Activated naive CD4-positive, alpha-beta T cell treated with anti-CD3 and anti-CD28 coated beads for 36 hours (primary cell): ENCODE measurements at regions of chr5 and their contacts with region 1.

Region 1: DNA sequence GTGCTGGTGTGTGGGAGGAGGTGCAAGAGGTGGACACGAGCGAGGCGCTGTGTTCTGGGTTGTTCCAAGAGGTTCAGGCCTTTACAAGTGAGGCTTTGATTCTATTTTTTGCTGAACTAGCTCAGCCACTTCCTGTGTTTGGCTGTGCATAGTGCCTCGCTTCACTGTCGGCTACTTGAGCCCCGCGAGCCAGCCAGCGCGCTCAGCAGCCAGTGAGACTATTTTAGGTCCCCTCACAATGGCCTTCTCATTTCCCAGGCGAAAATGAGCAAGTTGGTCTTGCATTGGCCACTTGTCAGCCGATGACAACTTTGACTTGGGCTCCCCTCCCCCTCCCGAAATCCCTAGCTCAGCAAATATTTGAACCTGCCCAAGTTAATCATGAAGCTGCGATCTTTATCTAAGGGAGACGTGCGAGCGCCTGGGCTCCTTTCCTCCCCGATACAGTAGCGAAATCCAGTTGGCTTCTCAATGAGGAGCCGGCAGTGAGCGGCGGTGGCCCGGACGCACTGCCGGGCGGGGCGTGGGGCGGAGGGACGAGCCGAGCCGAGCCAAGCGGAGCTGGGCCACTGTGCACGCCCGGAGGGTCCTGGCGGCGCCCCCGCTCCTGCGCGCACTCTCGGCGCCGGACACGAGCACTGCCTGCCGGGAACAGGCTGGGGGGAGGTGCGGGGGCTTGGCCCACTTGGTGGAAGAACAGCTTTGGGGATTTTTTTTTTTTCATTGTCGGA is 72.6 kb downstream of the PIK3R1 start:
- DNase-seq: peak; percentile 58
- H3K4me3 Mint-ChIP-seq: peak overlapping the region; percentile 83
- H3K27ac Mint-ChIP-seq: peak overlapping the region; percentile 81
- H3K4me1 Mint-ChIP-seq: peaks cover 73% of the 10 kb centered on the region
- H3K27me3 Mint-ChIP-seq: no peaks in the 10 kb centered on the region

Region 2: DNA sequence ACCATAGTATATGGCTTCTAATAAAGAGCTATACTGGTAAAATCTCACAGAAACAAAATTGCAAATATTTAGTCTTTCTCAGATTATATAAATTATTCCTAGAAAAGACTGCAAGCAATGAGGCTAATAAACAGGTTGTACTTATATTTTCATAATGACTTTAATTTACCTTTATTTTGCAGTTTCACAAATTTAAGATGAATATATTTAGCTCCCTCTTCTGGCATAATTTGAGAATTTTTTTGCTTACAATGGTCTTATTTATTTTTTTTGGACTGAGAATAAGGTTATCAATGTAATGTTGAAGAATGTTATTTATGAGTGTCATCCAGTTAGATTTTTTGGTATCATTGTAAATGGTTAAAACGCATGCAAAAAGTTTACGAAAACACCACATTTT is 15.9 kb before region 1 on chr5:
- CTCF ChIA-PET with region 1: interaction called, 21 read pairs
- intact Hi-C with region 1: no loop called
- DNase-seq: no peak
- H3K4me3 Mint-ChIP-seq: no peak overlapping the region
- H3K27ac Mint-ChIP-seq: peak overlapping the region; percentile 36
- H3K4me1 Mint-ChIP-seq: peaks cover 82% of the 10 kb centered on the region
- H3K27me3 Mint-ChIP-seq: no peaks in the 10 kb centered on the region

Region 3: DNA sequence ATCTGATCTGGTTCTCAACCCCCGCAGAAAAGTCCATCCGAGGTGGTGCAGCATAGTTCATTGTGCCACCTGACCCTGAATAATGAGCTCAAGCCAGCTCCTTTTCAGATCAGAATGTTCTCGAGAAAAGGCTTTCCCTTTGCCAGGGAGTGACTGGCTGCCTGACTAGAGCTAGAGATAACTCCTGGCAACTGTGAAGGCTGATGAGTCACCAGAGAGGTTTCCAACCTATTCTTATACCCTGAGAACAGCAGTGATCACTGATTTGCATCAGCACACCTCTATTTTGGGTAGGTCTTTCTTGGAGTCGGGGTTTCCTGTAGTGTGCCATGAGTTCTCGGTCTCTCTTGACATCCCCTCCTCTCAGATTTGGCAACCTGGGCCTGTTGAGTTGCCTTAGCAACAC is 55.3 kb after region 1 on chr5:
- CTCF ChIA-PET with region 1: interaction called, 5 read pairs
- intact Hi-C with region 1: loop called (anchors 1 kb)
- DNase-seq: peak; percentile 57
- H3K4me3 Mint-ChIP-seq: no peak overlapping the region
- H3K27ac Mint-ChIP-seq: no peak overlapping the region
- H3K4me1 Mint-ChIP-seq: peaks cover 25% of the 10 kb centered on the region
- H3K27me3 Mint-ChIP-seq: no peaks in the 10 kb centered on the region

Region 4: GRCh38 chr5:68544648-68545552 is 256.8 kb after region 1 on chr5:
- CTCF ChIA-PET with region 1: no interaction called
- intact Hi-C with region 1: loop called (anchors 5 kb)
- DNase-seq: no peak
- H3K4me3 Mint-ChIP-seq: no peak overlapping the region
- H3K27ac Mint-ChIP-seq: no peak overlapping the region
- H3K4me1 Mint-ChIP-seq: peaks cover 5% of the 10 kb centered on the region
- H3K27me3 Mint-ChIP-seq: peaks cover 3% of the 10 kb centered on the region

Region 5: GRCh38 chr5:68745448-68745847 is 457.3 kb after region 1 on chr5:
- CTCF ChIA-PET with region 1: no interaction called
- intact Hi-C with region 1: loop called (anchors 1 kb)
- DNase-seq: peak; percentile 27
- H3K4me3 Mint-ChIP-seq: no peak overlapping the region
- H3K27ac Mint-ChIP-seq: no peak overlapping the region
- H3K4me1 Mint-ChIP-seq: peaks cover 3% of the 10 kb centered on the region
- H3K27me3 Mint-ChIP-seq: no peaks in the 10 kb centered on the region

Region 6: DNA sequence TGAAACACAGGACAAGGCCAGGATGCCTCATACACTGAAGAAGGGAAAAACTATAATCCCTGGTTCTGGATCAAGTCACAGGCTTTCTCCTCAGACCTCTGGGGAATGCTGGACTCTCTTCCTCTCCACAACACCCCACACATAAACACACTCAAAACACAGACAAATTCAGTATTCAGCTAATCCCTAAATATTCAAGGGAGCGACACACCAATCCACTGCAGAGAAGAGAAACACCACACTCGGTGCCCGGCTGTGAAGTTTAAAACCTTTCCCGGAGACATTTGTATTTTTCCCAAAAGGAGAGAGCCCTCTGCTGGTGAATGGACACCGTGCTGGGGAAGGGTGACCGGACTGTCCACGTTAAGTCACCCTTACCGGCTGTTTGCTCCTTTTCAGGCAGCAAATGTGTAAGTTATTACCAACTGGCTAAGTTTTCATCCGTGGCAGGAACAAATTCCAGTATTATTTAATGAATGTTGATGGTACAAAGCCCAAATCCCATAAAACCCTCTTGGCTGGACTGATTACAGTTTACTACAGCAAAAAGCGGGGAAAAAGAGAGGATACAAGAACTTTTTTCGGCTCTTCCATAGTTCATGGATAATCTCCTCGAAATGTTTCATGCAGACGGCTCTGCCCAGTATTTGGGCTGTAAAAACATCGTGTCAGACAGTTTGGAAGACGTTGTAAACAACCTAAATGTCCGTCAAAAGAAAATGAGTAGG is 674.8 kb after region 1 on chr5:
- CTCF ChIA-PET with region 1: interaction called, 4 read pairs
- intact Hi-C with region 1: loop called (anchors 1 kb)
- DNase-seq: peak; percentile 51
- H3K4me3 Mint-ChIP-seq: no peak overlapping the region
- H3K27ac Mint-ChIP-seq: no peak overlapping the region
- H3K4me1 Mint-ChIP-seq: peaks cover 1% of the 10 kb centered on the region
- H3K27me3 Mint-ChIP-seq: no peaks in the 10 kb centered on the region